ENCODE measurements at regions of chr6 and their contacts with region 1.

Region 1: DNA sequence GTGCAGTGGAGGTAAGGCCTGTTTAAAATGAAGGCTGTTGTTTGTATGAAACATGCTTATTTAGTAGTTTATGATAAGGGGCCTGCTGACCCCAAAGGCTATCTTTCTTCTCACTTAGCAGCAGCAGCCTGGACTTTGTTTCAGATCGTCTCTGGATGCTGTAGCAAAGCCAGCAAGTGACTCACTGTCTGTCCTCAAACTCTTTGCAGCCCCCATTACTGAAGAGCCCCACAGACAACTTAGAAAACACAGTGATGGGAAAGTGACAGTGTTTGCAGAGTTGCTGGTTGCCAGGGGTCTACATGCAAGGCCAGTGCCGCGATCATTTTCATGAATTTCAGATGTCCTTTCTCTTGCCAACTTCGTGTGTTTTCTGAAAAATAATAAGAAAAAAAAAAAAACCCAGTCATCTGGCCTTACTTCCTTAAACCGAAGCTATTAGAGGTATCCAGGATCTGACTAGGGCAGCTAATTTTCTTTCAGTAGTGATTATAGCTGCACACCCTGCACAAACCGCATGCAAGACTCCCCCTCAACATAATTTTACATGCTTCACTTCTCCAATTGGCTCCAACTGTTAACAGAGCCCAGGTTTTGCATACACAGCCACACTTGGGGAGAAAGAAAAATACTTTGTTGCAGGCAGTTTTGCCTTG is 11.6 kb upstream of the F13A1 start:
- DNase-seq: no peak
- ATAC-seq: no peak
- H3K4me3 ChIP-seq: no peak overlapping the region
- H3K27ac ChIP-seq: no peak overlapping the region
- H3K4me1 ChIP-seq: no peaks in the 10 kb centered on the region
- H3K27me3 ChIP-seq: peaks cover 16% of the 10 kb centered on the region
- CTCF ChIP-seq: no peak

Region 2: DNA sequence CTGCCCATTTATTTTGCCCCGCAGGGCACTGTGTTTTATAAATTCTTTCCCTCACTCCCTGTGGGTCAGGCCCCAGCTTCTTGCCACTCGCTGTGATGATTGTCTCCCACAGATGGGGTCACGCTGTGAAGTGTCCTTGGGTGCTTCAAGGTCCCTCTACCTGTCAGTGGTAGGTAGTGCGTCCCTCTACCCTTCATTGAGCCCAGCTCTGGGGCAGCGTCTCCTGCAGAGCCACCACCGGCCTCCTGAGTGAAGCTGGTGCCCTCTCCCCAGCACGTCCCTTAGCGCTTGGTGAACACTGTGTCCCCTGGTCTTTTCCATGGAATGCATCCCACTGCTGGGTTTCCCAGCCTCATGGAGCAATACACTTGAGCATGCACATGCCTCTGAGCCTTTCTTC is 433.5 kb before region 1 on chr6:
- CTCF ChIA-PET with region 1: no interaction called
- POLR2A ChIA-PET with region 1: no interaction called
- intact Hi-C with region 1: no loop called
- DNase-seq: no peak
- ATAC-seq: no peak
- H3K4me3 ChIP-seq: no peak overlapping the region
- H3K27ac ChIP-seq: no peak overlapping the region
- H3K4me1 ChIP-seq: no peaks in the 10 kb centered on the region
- H3K27me3 ChIP-seq: no peaks in the 10 kb centered on the region
- CTCF ChIP-seq: no peak; the same call in 1 of the 2 replicates

Region 3: DNA sequence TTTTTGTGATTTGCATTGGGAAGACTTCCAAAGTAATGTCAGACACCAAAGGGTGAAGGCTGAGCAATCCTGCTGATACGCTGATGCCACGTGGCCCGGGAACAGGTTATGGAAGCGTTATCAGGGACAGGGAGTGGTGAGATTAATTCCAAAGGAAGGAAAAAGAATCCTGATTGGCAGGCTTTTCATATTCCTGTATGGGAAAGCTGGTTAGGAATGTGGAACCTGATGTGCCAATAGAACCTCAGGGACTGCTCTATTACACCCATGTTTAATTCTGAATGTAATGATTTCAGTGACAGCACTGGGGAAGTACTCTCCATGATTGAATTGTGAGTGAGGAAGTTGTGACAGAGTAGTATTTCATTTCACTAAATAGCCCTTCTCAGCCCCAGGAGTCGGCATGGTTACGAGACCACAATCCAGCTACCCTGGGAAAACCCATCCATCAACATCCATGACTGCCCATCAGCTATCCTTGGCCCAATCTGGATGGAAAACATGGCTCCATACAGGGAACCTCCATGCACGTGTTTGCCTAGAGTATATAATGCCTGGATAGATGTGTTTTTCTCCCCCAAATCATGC is 61.0 kb before region 1 on chr6:
- CTCF ChIA-PET with region 1: interaction called, 11 read pairs
- POLR2A ChIA-PET with region 1: no interaction called
- intact Hi-C with region 1: no loop called
- DNase-seq: no peak
- ATAC-seq: no peak
- H3K4me3 ChIP-seq: no peak overlapping the region
- H3K27ac ChIP-seq: no peak overlapping the region
- H3K4me1 ChIP-seq: no peaks in the 10 kb centered on the region
- H3K27me3 ChIP-seq: peaks cover 44% of the 10 kb centered on the region
- CTCF ChIP-seq: no peak

Measured in PC-3 (cell line).